Ovary (tissue), 10 donors: ENCODE measurements at regions of chr3 and their contacts with region 1.

Region 1: GRCh38 chr3:57169872-57170623 is 4.9 kb upstream of the IL17RD start:
- DNase-seq: peak; percentile 73 to 87 (median 82)
- H3K4me3 ChIP-seq: peak overlapping the region; percentile 40
- H3K27ac ChIP-seq: no peak overlapping the region
- H3K4me1 ChIP-seq: peaks cover 4% of the 10 kb centered on the region
- H3K27me3 ChIP-seq: no peaks in the 10 kb centered on the region
- CTCF ChIP-seq: peak; percentile 75 to 84 (median 76)
- EP300 ChIP-seq: no peak
- POLR2A ChIP-seq: no peak

Region 2: GRCh38 chr3:56997675-56998074 is 172.4 kb before region 1 on chr3:
- intact Hi-C with region 1: loop called in 2 of 4 experiments (anchors 10 kb)
- DNase-seq: no peak
- H3K4me3 ChIP-seq: no peak overlapping the region
- H3K27ac ChIP-seq: peak overlapping the region in 1 of 2 donors; percentile 37
- H3K4me1 ChIP-seq: peaks cover 11% of the 10 kb centered on the region
- H3K27me3 ChIP-seq: no peaks in the 10 kb centered on the region
- CTCF ChIP-seq: no peak
- EP300 ChIP-seq: peak; percentile 9
- POLR2A ChIP-seq: no peak

Region 3: GRCh38 chr3:57100046-57100695 is 69.9 kb before region 1 on chr3:
- intact Hi-C with region 1: loop called in 1 of 4 experiments (anchors 10 kb)
- DNase-seq: peak; percentile 62 to 85 (median 69)
- H3K4me3 ChIP-seq: no peak overlapping the region
- H3K27ac ChIP-seq: no peak overlapping the region
- H3K4me1 ChIP-seq: no peaks in the 10 kb centered on the region
- H3K27me3 ChIP-seq: no peaks in the 10 kb centered on the region
- CTCF ChIP-seq: peak; percentile 64 to 92 (median 89)
- EP300 ChIP-seq: no peak
- POLR2A ChIP-seq: no peak

Region 4: DNA sequence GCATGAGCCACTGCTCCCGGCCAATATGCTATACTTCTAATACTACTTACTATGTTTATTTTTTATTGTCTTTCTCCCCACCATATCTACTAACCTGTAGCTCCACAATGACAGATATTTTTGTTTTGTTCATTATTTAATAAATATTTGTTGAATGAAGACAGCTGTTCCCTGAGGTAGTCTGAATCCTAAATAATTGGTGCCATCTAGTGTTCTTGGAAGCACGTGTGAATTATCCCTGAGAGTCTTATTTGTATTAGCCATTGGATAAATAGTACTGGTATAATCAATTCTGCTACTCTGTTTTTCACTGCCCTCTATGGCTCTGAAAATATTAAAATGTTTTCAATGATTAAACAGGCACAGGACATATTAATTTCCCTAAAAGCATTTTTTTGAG is 51.8 kb after region 1 on chr3:
- intact Hi-C with region 1: loop called in 2 of 4 experiments (anchors 5 to 10 kb)
- DNase-seq: no peak
- H3K4me3 ChIP-seq: no peak overlapping the region
- H3K27ac ChIP-seq: no peak overlapping the region
- H3K4me1 ChIP-seq: no peaks in the 10 kb centered on the region
- H3K27me3 ChIP-seq: no peaks in the 10 kb centered on the region
- CTCF ChIP-seq: peak in 2 of 3 donors; percentile 39 to 49
- EP300 ChIP-seq: no peak
- POLR2A ChIP-seq: no peak

Region 5: GRCh38 chr3:57227204-57227929 is 57.3 kb after region 1 on chr3 and contains the start of gene APPL1:
- intact Hi-C with region 1: loop called in 2 of 4 experiments (anchors 5 to 10 kb)
- DNase-seq: peak; percentile 93 to 96 (median 94)
- H3K4me3 ChIP-seq: peak within 1 kb of the TSS; percentile 96
- H3K27ac ChIP-seq: peak within 1 kb of the TSS; percentile 79 to 98
- H3K4me1 ChIP-seq: peaks cover 7% of the 10 kb centered on the region
- H3K27me3 ChIP-seq: no peaks in the 10 kb centered on the region
- CTCF ChIP-seq: no peak
- EP300 ChIP-seq: no peak
- POLR2A ChIP-seq: peak; percentile 91
- total RNA-seq, gene APPL1: 33.9 to 69.6 (median 50.9) TPM